ENCODE measurements at regions of chr19 and their contacts with region 1.

Region 1: GRCh38 chr19:10644260-10645007 is 9.7 kb upstream of the ILF3 start:
- DNase-seq: peak; percentile 75 to 91 (median 85)
- ATAC-seq: peak; percentile 90 to 95
- H3K4me3 Mint-ChIP-seq: peak overlapping the region in 4 of 10 donors; percentile 40 to 82 (median 54)
- H3K27ac Mint-ChIP-seq: peak overlapping the region; percentile 79 to 95 (median 90)
- H3K4me1 Mint-ChIP-seq: peaks cover 23 to 50% (median 34%) of the 10 kb centered on the region in 4 donors
- H3K27me3 Mint-ChIP-seq: no peaks in the 10 kb centered on the region

Region 2: GRCh38 chr19:10580979-10581631 is 63.3 kb before region 1 on chr19:
- POLR2A ChIA-PET with region 1: interaction called, 64 read pairs
- DNase-seq: peak; percentile 77 to 94 (median 86)
- ATAC-seq: peak; percentile 95 to 98
- H3K4me3 Mint-ChIP-seq: peak overlapping the region in 2 of 10 donors; percentile 3 to 22
- H3K27ac Mint-ChIP-seq: peak overlapping the region in 4 of 10 donors; percentile 3 to 87 (median 62)
- H3K4me1 Mint-ChIP-seq: peaks cover 7 to 15% (median 14%) of the 10 kb centered on the region in 4 donors
- H3K27me3 Mint-ChIP-seq: peaks cover 0 to 2% (median 0%) of the 10 kb centered on the region in 5 donors

Region 3: GRCh38 chr19:10717356-10718204 is 73.1 kb after region 1 on chr19 and contains the start of gene DNM2:
- POLR2A ChIA-PET with region 1: no interaction called
- DNase-seq: peak; percentile 91 to 99 (median 96)
- ATAC-seq: peak; percentile 87 to 88
- H3K4me3 Mint-ChIP-seq: peak within 1 kb of the TSS; percentile 85 to 97 (median 93)
- H3K27ac Mint-ChIP-seq: peak within 1 kb of the TSS; percentile 76 to 96 (median 92)
- H3K4me1 Mint-ChIP-seq: peaks cover 17 to 48% (median 42%) of the 10 kb centered on the region in 4 donors
- H3K27me3 Mint-ChIP-seq: no peaks in the 10 kb centered on the region
- polyA plus RNA-seq, gene DNM2: 45.0 to 91.4 (median 60.9) TPM